Naive thymus-derived CD4-positive, alpha-beta T cell (primary cell): ENCODE measurements at regions of chr11 and their contacts with region 1.

Region 1: DNA sequence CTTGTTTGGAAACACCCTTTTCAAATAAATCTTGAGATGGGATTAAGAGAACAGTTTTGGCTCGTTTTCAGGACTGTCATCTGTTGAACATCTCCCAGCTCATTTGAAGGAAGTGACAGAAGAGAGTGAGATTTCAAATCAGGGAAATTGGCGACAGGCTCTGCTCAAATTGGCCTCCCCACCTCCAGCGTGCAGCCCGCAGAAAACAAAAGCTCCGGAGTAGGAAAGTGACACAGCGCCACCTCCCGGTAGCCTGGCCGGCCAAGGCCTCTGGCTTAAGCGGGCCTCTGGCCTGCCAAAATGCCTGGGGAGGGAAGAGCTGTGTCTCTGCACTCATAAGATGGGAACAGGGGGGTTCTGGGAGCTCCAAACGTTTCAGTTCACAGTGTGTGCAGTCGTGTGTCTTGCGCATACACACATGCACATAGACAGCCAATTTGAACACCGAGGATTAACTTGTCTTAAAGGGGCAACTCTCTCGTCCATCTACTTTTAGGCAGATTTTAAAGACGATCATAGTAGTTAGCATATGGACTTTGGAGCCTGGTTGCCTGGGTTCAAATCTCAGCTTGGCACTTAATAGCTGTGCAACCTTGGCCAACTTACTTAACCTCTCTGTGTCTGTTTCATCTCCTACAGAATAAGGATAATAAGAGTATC is 132.7 kb upstream of the RCN1 start:
- DNase-seq: peak in 8 of 9 donors; percentile 13 to 70 (median 31)
- ATAC-seq: peak; percentile 49
- H3K4me3 ChIP-seq: no peak overlapping the region
- H3K4me3 Mint-ChIP-seq: no peak overlapping the region
- H3K27ac ChIP-seq: no peak overlapping the region
- H3K27ac Mint-ChIP-seq: no peak overlapping the region
- H3K4me1 ChIP-seq: no peaks in the 10 kb centered on the region
- H3K4me1 Mint-ChIP-seq: peaks cover 0 to 7% (median 0%) of the 10 kb centered on the region in 7 donors
- H3K27me3 ChIP-seq: no peaks in the 10 kb centered on the region
- H3K27me3 Mint-ChIP-seq: peaks cover 0 to 13% (median 4%) of the 10 kb centered on the region in 5 donors

Region 2: DNA sequence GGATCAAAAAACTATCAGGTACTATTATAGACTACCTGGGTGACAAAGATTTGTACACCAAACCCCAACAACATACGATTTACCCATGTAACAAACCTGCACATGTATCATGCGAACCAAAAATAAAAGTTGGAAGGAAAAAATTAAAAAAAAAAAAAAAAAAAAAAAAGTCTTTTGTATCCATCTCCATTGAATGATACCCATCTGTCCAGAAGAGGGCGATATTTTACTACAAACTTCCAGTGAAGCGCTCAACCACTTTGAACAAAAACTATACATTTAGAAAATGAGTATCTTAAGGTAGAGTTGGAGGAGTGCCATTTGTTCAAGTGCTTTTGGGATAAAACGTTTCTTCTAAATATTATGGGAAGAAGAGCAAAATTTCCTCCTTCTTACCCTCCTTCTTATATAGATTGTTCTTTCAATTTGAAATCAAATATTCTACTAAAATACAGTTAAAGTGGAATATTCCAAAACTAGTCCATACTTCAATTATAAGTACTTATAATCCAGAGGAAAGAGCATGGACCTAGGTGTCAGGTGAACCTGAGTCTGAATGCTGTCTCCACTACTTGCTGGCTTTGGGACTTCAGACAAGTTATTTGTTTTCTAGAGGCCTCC is 1612.0 kb before region 1 on chr11:
- CTCF ChIA-PET with region 1: no interaction called
- POLR2A ChIA-PET with region 1: no interaction called
- intact Hi-C with region 1: loop called in 1 of 2 experiments (anchors 5 kb)
- DNase-seq: peak in 7 of 9 donors; percentile 29 to 58 (median 39)
- ATAC-seq: peak; percentile 75
- H3K4me3 ChIP-seq: no peak overlapping the region
- H3K4me3 Mint-ChIP-seq: no peak overlapping the region
- H3K27ac ChIP-seq: no peak overlapping the region
- H3K27ac Mint-ChIP-seq: no peak overlapping the region
- H3K4me1 ChIP-seq: no peaks in the 10 kb centered on the region
- H3K4me1 Mint-ChIP-seq: peaks cover 0 to 17% (median 9%) of the 10 kb centered on the region in 7 donors
- H3K27me3 ChIP-seq: no peaks in the 10 kb centered on the region
- H3K27me3 Mint-ChIP-seq: peaks cover 0 to 12% (median 0%) of the 10 kb centered on the region in 5 donors

Region 3: DNA sequence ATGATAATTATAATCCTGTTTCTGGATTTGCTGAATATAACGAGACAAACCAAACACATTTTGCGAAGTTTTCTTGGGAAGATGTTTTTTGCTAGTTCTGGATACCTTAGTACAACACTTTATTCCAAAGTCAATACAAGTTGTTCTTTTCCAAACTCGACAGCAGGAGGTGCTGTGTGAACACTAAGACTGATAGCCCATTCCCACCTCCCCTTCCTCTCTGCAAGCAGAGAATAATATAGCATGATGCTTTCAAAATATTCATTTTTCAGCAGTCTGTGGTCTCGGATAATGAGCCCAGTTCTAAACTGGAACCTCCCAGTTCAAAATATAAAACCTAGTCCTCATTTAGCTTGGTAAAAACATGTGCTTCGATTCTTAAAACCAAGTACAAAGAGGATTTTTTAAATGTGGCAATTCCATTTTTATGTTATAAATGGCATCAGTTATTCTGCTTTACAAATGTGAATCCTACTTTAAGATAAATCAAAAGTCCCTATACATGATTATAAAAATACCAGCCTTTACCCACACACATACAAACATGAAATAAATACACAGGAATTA is 717.8 kb before region 1 on chr11:
- CTCF ChIA-PET with region 1: interaction called, 7 read pairs
- POLR2A ChIA-PET with region 1: no interaction called
- intact Hi-C with region 1: loop called in 1 of 2 experiments (anchors 2 kb)
- DNase-seq: peak in 6 of 9 donors; percentile 10 to 22 (median 15)
- ATAC-seq: no peak
- H3K4me3 ChIP-seq: no peak overlapping the region
- H3K4me3 Mint-ChIP-seq: no peak overlapping the region
- H3K27ac ChIP-seq: no peak overlapping the region
- H3K27ac Mint-ChIP-seq: no peak overlapping the region
- H3K4me1 ChIP-seq: no peaks in the 10 kb centered on the region
- H3K4me1 Mint-ChIP-seq: no peaks in the 10 kb centered on the region
- H3K27me3 ChIP-seq: peaks cover 0 to 3% of the 10 kb centered on the region in 2 donors
- H3K27me3 Mint-ChIP-seq: peaks cover 0 to 8% (median 0%) of the 10 kb centered on the region in 5 donors

Region 4: DNA sequence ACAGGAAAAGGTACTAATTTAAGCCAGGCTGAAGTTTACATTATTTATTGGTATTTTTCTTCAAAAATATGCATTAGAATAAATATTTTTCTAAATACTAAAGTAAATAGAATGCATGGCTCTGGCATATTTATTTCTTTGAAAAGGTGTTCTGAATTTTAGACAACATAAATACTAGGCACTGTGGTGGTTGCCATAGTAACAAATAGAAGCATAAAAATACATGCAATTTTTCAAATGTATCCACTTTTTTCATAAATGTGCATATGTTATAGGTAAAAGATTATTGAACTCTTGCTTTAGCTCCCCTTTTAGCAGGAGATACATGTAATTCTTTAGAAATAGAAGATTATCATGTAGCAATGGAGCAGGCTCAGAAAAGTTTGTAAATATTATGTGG is 607.0 kb before region 1 on chr11:
- CTCF ChIA-PET with region 1: no interaction called
- POLR2A ChIA-PET with region 1: no interaction called
- intact Hi-C with region 1: no loop called
- DNase-seq: no peak
- ATAC-seq: no peak
- H3K4me3 ChIP-seq: no peak overlapping the region
- H3K4me3 Mint-ChIP-seq: no peak overlapping the region
- H3K27ac ChIP-seq: no peak overlapping the region
- H3K27ac Mint-ChIP-seq: no peak overlapping the region
- H3K4me1 ChIP-seq: no peaks in the 10 kb centered on the region
- H3K4me1 Mint-ChIP-seq: no peaks in the 10 kb centered on the region
- H3K27me3 ChIP-seq: no peaks in the 10 kb centered on the region
- H3K27me3 Mint-ChIP-seq: peaks cover 2 to 25% (median 15%) of the 10 kb centered on the region in 5 donors

Region 5: DNA sequence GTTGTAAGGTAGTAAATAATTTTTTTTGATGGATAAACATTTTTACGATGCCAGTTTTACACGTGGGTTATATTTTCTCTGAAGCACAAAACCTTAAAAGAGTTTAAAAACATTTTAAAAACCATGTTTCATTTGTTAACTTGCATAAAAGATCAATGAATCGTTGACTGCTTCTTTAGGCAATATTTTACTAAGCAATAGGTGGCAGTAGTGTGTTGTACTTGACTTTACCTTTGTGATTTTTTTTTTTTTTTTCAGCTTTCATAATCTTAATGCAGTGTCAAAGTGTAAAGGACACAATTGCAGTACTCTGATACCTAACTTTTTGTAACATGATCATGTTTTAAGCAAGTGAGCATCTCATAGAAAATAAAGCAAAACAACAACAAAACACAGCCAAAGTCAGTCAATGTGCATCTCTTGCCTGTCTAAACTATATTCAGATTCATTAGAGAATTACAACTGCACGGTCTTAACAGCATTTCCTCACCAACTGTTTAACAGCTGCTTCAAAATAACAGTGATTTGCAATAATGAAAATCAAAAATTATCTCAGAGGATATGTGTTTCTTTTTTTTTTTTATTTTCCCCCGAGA is 560.9 kb before region 1 on chr11:
- CTCF ChIA-PET with region 1: interaction called, 4 read pairs
- POLR2A ChIA-PET with region 1: no interaction called
- intact Hi-C with region 1: loop called in 1 of 2 experiments (anchors 1 kb)
- DNase-seq: peak in 5 of 9 donors; percentile 18 to 38 (median 35)
- ATAC-seq: peak; percentile 37
- H3K4me3 ChIP-seq: no peak overlapping the region
- H3K4me3 Mint-ChIP-seq: no peak overlapping the region
- H3K27ac ChIP-seq: no peak overlapping the region
- H3K27ac Mint-ChIP-seq: no peak overlapping the region
- H3K4me1 ChIP-seq: no peaks in the 10 kb centered on the region
- H3K4me1 Mint-ChIP-seq: peaks cover 0 to 7% (median 6%) of the 10 kb centered on the region in 7 donors
- H3K27me3 ChIP-seq: no peaks in the 10 kb centered on the region
- H3K27me3 Mint-ChIP-seq: no peaks in the 10 kb centered on the region

Region 6: DNA sequence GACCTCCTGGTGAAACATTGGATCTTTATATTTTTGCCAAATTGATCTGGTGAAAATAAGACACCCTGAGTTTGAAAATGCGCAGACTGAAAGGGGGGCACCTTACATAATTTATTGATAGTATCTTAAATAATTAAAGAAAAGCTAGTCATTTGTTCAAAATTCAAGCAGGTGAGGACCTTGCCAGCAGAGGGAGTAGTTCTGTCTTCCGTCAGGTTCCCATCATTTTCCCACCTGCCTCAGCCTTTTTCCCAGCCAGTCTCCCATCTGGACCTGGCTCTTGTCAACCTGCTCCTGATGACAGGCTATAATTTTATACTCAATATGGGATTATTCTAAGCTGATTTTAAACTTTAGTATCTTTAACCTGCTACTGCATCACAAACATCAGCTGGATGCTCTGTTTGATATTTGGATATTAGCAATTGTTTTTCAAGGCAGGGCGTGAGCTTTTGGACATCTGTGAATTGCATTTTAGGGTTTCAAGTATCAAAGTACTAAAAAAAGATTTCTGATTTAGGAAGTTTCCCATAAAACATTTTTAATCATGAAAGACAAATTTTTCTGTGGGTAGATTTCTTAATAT is 316.6 kb before region 1 on chr11:
- CTCF ChIA-PET with region 1: no interaction called
- POLR2A ChIA-PET with region 1: no interaction called
- intact Hi-C with region 1: loop called in 1 of 2 experiments (anchors 5 kb)
- DNase-seq: no peak
- ATAC-seq: no peak
- H3K4me3 ChIP-seq: no peak overlapping the region
- H3K4me3 Mint-ChIP-seq: no peak overlapping the region
- H3K27ac ChIP-seq: no peak overlapping the region
- H3K27ac Mint-ChIP-seq: no peak overlapping the region
- H3K4me1 ChIP-seq: no peaks in the 10 kb centered on the region
- H3K4me1 Mint-ChIP-seq: peaks cover 0 to 3% (median 0%) of the 10 kb centered on the region in 7 donors
- H3K27me3 ChIP-seq: no peaks in the 10 kb centered on the region
- H3K27me3 Mint-ChIP-seq: no peaks in the 10 kb centered on the region